OCI-LY7 (cell line): ENCODE measurements at regions of chr11 and their contacts with region 1.

Region 1: GRCh38 chr11:48034926-48035871 is 54.8 kb downstream of the PTPRJ start:
- DNase-seq: no peak
- H3K4me3 ChIP-seq: no peak overlapping the region
- H3K27ac ChIP-seq: no peak overlapping the region
- H3K4me1 ChIP-seq: peaks cover 88% of the 10 kb centered on the region
- CTCF ChIP-seq: no peak

Region 2: DNA sequence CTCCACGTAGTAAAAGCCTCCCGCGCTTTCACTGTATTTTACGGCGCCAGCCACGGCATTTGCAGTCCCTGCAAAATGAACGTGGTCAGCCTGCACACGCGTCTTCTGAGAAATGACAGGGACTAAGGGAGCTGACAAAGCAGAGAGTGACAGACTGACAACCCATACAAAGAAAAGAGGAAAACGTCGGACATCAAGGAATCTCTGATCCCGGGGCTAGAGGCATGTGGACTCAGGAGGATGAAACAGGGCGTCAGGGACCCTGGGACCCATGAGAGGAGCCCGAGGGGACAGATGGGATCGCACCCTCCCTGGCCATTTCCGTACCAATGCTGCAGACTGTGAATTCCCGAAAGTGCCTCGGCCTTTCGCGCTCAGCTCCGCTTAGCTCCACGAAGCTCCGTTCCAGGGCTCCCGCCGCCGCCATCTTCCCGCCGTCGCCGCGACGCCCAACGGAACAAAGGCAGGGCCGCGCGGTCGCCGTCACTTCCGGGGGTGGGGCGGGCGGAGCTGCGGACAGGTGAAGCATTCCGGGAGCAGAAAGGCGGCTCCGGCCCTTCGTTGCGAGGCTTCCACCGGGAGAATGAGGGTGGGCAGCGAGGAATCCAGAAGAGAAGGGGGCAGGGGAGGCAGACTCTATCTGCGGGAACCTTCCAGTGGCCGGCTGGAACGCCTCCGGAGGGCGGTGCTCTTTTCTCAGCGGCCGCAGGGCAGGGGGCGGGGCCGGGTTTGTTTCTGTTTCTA is 187.1 kb before region 1 on chr11 and contains the start of gene NUP160:
- CTCF ChIA-PET with region 1: no interaction called
- POLR2A ChIA-PET with region 1: no interaction called
- intact Hi-C with region 1: loop called (anchors 5 kb)
- DNase-seq: peak; percentile 76
- H3K4me3 ChIP-seq: peak within 1 kb of the TSS; percentile 94
- H3K27ac ChIP-seq: peak within 1 kb of the TSS; percentile 59
- H3K4me1 ChIP-seq: peaks cover 50% of the 10 kb centered on the region
- CTCF ChIP-seq: no peak
- total RNA-seq, gene NUP160: 23.9 and 32.0 TPM in 2 replicates